OCI-LY7 (cell line): ENCODE measurements at regions of chr6 and their contacts with region 1.

Region 1: GRCh38 chr6:159125014-159125609 is 44.1 kb upstream of the FNDC1 start:
- DNase-seq: peak; percentile 52
- H3K4me3 ChIP-seq: no peak overlapping the region
- H3K27ac ChIP-seq: peak overlapping the region; percentile 89
- H3K4me1 ChIP-seq: peaks cover 72% of the 10 kb centered on the region
- CTCF ChIP-seq: peak; percentile 95

Region 2: GRCh38 chr6:158999666-159000403 is 125.3 kb before region 1 on chr6 and contains the start of gene RSPH3:
- CTCF ChIA-PET with region 1: interaction called, 3 read pairs
- POLR2A ChIA-PET with region 1: interaction called, 10 read pairs
- intact Hi-C with region 1: no loop called
- DNase-seq: peak; percentile 95
- H3K4me3 ChIP-seq: peak within 1 kb of the TSS; percentile 75
- H3K27ac ChIP-seq: peak within 1 kb of the TSS; percentile 65
- H3K4me1 ChIP-seq: peaks cover 17% of the 10 kb centered on the region
- CTCF ChIP-seq: peak; percentile 44; the same call in 1 of the 2 replicates
- total RNA-seq, gene RSPH3: 2.7 TPM in 2 replicates

Region 3: GRCh38 chr6:159422041-159422984 is 297.2 kb after region 1 on chr6:
- CTCF ChIA-PET with region 1: no interaction called
- POLR2A ChIA-PET with region 1: no interaction called
- intact Hi-C with region 1: no loop called
- DNase-seq: no peak
- H3K4me3 ChIP-seq: no peak overlapping the region
- H3K27ac ChIP-seq: no peak overlapping the region
- H3K4me1 ChIP-seq: no peaks in the 10 kb centered on the region
- CTCF ChIP-seq: no peak